Endothelial cell of umbilical vein (primary cell): ENCODE measurements at regions of chr7 and their contacts with region 1.

Region 1: GRCh38 chr7:64902806-64903721 is at the start of gene ZNF273:
- DNase-seq: peak; percentile 85
- H3K4me3 ChIP-seq: peak within 1 kb of the TSS; percentile 73 to 96 (median 76)
- H3K27ac ChIP-seq: peak within 1 kb of the TSS; percentile 67
- H3K4me1 ChIP-seq: peaks cover 3% of the 10 kb centered on the region
- H3K27me3 ChIP-seq: no peaks in the 10 kb centered on the region
- CTCF ChIP-seq: no peak
- POLR2A ChIP-seq: peak; percentile 29
- total RNA-seq, gene ZNF273: 4.0 and 4.1 TPM in 2 replicates

Region 2: GRCh38 chr7:64794171-64794844 is 108.8 kb before region 1 on chr7 and contains the start of gene ZNF138:
- CTCF ChIA-PET with region 1: no interaction called
- POLR2A ChIA-PET with region 1: no interaction called
- dilution Hi-C with region 1: no loop called
- intact Hi-C with region 1: loop called (anchors 10 kb)
- DNase-seq: peak; percentile 95
- H3K4me3 ChIP-seq: peak within 1 kb of the TSS; percentile 80 to 92 (median 90)
- H3K27ac ChIP-seq: peak within 1 kb of the TSS; percentile 78
- H3K4me1 ChIP-seq: peaks cover 3% of the 10 kb centered on the region
- H3K27me3 ChIP-seq: no peaks in the 10 kb centered on the region
- CTCF ChIP-seq: no peak
- POLR2A ChIP-seq: peak; percentile 60
- total RNA-seq, gene ZNF138: 3.3 and 4.4 TPM in 2 replicates

Region 3: GRCh38 chr7:65006094-65006992 is 103.3 kb after region 1 on chr7 and contains the start of gene ERV3-1:
- CTCF ChIA-PET with region 1: no interaction called
- POLR2A ChIA-PET with region 1: interaction called, 4 read pairs
- dilution Hi-C with region 1: no loop called
- intact Hi-C with region 1: loop called (anchors 10 kb)
- DNase-seq: peak; percentile 95
- H3K4me3 ChIP-seq: peak within 1 kb of the TSS; percentile 75 to 94 (median 85)
- H3K27ac ChIP-seq: peak within 1 kb of the TSS; percentile 86
- H3K4me1 ChIP-seq: peaks cover 15% of the 10 kb centered on the region
- H3K27me3 ChIP-seq: no peaks in the 10 kb centered on the region
- CTCF ChIP-seq: no peak
- POLR2A ChIP-seq: peak; percentile 94
- total RNA-seq, gene ERV3-1: 28.4 and 44.6 TPM in 2 replicates

Region 4: DNA sequence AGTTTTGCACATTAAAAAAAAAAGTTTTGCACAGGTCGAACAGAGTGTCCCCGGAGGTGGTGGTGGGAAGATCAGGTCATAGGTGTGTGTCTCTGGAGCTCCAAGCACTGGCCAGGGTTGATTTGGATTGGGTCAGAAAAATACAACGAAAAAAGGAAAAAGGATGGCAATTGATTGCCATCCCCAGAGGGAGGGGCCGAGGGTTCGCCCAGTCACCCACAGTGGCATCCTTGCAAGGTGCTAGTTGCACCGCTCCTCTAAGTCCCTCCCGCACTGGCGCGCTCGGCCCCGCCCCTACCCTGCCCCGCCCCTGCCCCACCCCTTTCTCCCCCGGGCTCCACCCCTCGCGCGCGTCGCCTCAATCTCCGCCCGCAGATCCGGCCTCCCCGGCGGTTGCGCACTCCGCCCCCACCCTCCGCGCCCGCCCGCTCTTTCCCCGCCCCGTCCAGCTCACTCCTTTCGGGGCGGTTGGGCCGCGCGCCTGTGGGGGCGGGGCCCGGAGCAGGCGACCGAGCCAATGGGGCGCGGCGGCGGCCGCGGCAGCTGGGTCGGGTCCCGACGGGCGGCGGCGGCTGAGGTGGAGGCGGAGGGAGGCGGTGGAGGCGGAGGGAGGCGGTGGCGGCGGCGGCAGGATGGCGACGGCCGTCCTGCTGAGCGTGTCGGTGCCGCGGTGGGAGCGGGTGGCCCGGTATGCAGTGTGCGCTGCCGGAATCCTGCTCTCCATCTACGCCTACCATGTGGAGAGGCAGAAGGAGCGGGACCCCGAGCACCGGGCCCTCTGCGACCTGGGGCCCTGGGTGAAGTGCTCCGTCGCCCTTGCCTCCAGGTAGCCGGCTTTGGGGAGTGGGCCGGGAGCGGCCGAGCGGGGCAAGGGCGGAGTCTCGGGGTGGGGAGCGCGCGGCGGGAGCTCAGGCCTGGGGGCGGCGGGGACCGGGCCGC is 134.9 kb after region 1 on chr7:
- CTCF ChIA-PET with region 1: no interaction called
- POLR2A ChIA-PET with region 1: no interaction called
- dilution Hi-C with region 1: no loop called
- intact Hi-C with region 1: loop called (anchors 2 kb)
- DNase-seq: peak; percentile 92
- H3K4me3 ChIP-seq: peak overlapping the region in 2 of 3 experiments; percentile 3 to 67
- H3K27ac ChIP-seq: peak overlapping the region; percentile 5
- H3K4me1 ChIP-seq: peaks cover 7% of the 10 kb centered on the region
- H3K27me3 ChIP-seq: no peaks in the 10 kb centered on the region
- CTCF ChIP-seq: no peak
- POLR2A ChIP-seq: peak; percentile 43